HepG2 (cell line): ENCODE measurements at regions of chr11 and their contacts with region 1.

Region 1: GRCh38 chr11:65354265-65355012 is at the start of gene TIGD3:
- DNase-seq: peak; percentile 92
- ATAC-seq: peak; percentile 79
- H3K4me3 ChIP-seq: peak within 1 kb of the TSS; percentile 70 to 82 (median 77)
- H3K27ac ChIP-seq: peak within 1 kb of the TSS; percentile 64
- H3K4me1 ChIP-seq: peaks cover 42% of the 10 kb centered on the region
- H3K27me3 ChIP-seq: no peaks in the 10 kb centered on the region
- CTCF ChIP-seq: peak; percentile 33
- EP300 ChIP-seq: no peak
- POLR2A ChIP-seq: peak; percentile 45 to 92
- RAD21 ChIP-seq: 0 out of 2 replicates have a peak, but pooled peaks have one; percentile 15
- total RNA-seq, gene TIGD3: 4.0 and 4.9 TPM in 2 replicates

Region 2: GRCh38 chr11:65321828-65322485 is 32.5 kb before region 1 on chr11:
- CTCF ChIA-PET with region 1: no interaction called
- POLR2A ChIA-PET with region 1: no interaction called
- in situ Hi-C with region 1: no loop called
- intact Hi-C with region 1: no loop called
- DNase-seq: no peak
- ATAC-seq: no peak
- H3K4me3 ChIP-seq: no peak overlapping the region
- H3K27ac ChIP-seq: no peak overlapping the region
- H3K4me1 ChIP-seq: peaks cover 14% of the 10 kb centered on the region
- H3K27me3 ChIP-seq: no peaks in the 10 kb centered on the region
- CTCF ChIP-seq: no peak
- EP300 ChIP-seq: no peak
- POLR2A ChIP-seq: no peak
- RAD21 ChIP-seq: no peak

Region 3: DNA sequence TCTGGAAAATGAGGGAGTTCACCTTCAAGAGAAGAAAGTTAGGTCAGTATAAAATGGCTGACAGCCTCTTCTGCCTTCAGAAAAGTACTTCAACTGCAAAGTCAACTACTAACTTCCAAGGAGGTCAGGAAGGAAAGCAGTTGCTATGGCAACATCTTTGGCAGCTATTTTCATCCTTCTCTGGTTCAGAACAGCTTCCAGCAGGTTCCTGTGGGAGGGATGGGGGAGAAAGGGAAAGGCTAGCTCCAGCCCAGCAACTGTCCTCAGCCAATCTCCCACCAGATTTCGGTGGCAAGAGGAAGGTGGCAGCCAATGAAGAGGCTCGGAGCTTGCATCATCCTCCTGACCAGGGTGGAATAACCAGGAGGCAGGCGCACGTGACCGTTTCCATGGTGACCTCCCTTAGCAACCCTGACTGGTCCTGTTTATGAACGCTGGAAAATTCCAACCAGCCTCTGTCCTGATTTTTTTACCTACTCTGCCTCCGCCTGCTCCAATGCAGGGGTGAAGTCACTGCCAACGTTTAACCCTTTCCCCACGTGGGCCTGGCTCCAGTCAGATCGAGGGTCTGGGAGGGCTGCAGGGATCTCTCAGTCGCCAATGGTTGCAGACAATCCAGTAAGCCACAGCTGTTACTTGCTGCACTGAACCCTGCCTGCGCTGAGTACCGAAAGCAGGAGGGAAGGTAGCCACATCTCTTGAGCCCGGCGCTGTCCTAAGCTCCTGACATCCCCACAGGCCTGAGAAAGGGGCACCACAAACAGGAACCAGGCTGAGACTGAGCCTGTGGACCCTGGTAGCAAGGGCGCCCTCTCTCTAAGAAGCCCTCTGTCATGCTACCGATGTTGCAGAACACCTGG is 133.2 kb after region 1 on chr11:
- CTCF ChIA-PET with region 1: no interaction called
- POLR2A ChIA-PET with region 1: interaction called, 13 read pairs
- in situ Hi-C with region 1: no loop called
- intact Hi-C with region 1: no loop called
- DNase-seq: peak; percentile 99
- ATAC-seq: peak; percentile 64
- H3K4me3 ChIP-seq: peak overlapping the region; percentile 41 to 72 (median 56)
- H3K27ac ChIP-seq: peak overlapping the region; percentile 88
- H3K4me1 ChIP-seq: peaks cover 83% of the 10 kb centered on the region
- H3K27me3 ChIP-seq: no peaks in the 10 kb centered on the region
- CTCF ChIP-seq: peak; percentile 49; the same call in 1 of the 2 replicates
- EP300 ChIP-seq: peak in 1 of 2 experiments; percentile 87; a peak in 2 of 4 replicates
- POLR2A ChIP-seq: peak; percentile 25 to 70; a peak in 2 of 4 replicates
- RAD21 ChIP-seq: peak; percentile 32; the same call in 1 of the 2 replicates